Ascending aorta (tissue), 2 donors: ENCODE measurements at regions of chr6 and their contacts with region 1.

Region 1: DNA sequence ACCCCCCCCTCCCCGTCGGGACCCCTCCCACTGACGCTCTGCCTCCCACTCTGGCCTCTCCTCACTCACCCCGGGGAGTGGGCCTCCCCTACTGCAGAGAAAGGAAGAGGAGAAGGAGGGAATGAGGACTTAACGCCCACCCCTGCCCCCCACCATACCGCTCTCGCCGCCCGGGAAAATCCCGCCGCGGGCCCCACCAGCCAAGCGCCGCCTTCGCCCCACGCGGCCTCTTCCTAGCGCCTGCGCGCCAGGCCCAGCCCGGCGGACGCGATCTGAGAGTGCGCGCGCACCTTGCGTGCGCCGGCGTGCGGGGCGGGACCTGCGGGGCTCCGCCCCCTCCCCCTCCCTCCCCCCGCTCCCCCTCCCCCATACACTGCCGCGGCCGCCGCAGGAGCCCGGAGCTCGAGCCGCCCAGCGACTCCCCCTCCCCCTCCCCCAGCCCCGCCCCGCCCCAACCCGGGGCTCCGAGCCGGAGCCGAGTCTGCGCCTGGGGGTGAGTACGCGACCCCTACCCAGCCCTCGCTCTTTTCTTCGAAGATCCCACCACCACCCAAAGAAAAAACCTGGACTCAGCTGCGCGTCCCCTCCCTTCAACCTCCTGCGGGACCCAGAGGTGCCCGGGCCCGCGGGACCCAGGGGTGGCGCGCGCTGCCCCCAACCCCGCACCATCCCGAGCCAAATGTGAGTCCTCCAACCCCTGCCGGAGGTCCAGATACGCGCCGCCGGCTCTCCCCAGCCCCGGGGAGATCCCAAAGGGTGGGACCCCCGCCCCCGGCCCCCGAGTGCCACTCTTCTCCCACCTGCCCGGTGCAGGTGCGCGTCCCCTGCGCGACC is at the starts of genes MRPL14 and TMEM63B:
- DNase-seq: peak; percentile 43 to 91
- H3K4me3 ChIP-seq: peak within 1 kb of the TSS; percentile 85 to 86
- H3K27ac ChIP-seq: peak within 1 kb of the TSS; percentile 81 to 84
- H3K4me1 ChIP-seq: peaks cover 0 to 23% of the 10 kb centered on the region in 2 donors
- H3K27me3 ChIP-seq: no peaks in the 10 kb centered on the region
- CTCF ChIP-seq: no peak
- total RNA-seq, gene MRPL14: 61.8 TPM
- total RNA-seq, gene TMEM63B: 9.6 TPM

Region 2: GRCh38 chr6:44151348-44152108 is 24.1 kb after region 1 on chr6:
- intact Hi-C with region 1: loop called (anchors 2 kb)
- DNase-seq: peak in 1 of 2 donors; percentile 81
- H3K4me3 ChIP-seq: peak overlapping the region in 1 of 2 donors; percentile 15
- H3K27ac ChIP-seq: no peak overlapping the region
- H3K4me1 ChIP-seq: peaks cover 0 to 3% of the 10 kb centered on the region in 2 donors
- H3K27me3 ChIP-seq: no peaks in the 10 kb centered on the region
- CTCF ChIP-seq: peak; percentile 98 to 99 (median 99)

Region 3: DNA sequence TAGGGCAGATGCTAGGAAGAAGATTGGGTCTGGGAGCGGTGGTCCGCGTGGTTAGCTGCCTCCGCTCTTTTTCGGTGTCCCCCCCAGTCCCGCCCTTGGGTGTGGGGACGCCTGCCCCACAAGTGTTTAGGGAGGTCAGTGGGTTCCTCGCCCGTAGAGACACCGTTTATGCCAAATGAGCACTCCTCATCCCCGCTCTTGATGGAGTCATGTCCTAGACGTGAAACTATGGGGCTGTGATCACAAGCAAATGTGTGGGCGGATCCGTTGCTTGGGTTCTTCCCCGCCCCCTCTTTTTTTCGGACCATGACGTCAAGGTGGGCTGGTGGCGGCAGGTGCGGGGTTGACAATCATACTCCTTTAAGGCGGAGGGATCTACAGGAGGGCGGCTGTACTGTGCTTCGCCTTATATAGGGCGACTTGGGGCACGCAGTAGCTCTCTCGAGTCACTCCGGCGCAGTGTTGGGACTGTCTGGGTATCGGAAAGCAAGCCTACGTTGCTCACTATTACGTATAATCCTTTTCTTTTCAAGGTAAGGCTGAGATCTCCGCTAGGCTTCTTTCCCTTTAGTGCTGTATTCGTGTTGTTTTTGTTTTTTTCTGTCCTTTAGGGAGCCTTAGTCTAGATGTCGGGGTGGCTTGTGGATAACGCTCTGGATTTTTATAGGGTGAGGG is 119.4 kb after region 1 on chr6 and contains the start of gene HSP90AB1:
- intact Hi-C with region 1: loop called (anchors 2 kb)
- DNase-seq: peak; percentile 96 to 99
- H3K4me3 ChIP-seq: peak within 1 kb of the TSS; percentile 92 to 99
- H3K27ac ChIP-seq: peak within 1 kb of the TSS; percentile 99 to 100
- H3K4me1 ChIP-seq: peaks cover 0 to 30% of the 10 kb centered on the region in 2 donors
- H3K27me3 ChIP-seq: no peaks in the 10 kb centered on the region
- CTCF ChIP-seq: peak in 1 of 3 experiments; percentile 9
- total RNA-seq, gene HSP90AB1: 354 TPM